Calu3 (cell line): ENCODE measurements at regions of chr11 and their contacts with region 1.

Region 1: DNA sequence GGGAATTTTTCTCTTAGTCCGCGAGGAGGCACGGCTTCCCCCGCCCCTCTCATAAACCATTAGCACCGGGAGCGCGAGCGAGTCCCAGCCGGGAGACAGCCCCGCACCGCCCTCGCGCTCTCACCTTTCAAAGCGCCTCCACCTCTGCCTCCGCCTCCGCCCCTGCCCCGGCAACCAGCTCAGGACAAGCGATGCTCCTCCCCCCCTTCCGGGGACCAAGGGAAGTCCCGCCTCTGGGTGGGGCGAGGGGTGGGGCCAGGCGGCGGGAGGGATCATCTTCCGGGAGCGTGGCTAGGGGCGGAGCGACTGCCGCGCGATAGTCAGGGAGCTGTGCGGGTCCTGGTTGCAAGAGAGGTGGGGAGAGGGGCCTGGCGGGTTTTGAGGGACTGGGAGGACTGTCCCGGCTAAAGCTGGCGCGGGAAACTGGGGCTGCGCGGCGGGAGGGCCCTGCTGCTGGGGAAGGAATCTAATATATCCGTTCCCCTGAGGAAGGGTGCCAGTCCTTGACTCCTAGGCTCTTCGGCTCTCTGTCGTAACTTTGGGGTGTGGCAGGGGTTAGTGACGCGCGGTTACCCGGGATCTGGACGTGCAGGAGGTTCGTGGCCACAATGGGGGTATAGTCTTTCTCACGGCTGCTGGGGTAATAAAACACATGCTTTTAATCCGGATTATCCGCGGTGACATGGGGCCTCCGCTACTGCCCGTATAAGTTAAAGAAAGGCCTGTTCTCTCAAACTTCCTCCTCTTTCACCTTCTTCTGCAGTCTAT is at the starts of genes CCDC82 and JRKL:
- DNase-seq: peak; percentile 96
- H3K4me3 Mint-ChIP-seq: peak within 1 kb of the TSS; percentile 92
- H3K27ac Mint-ChIP-seq: peak within 1 kb of the TSS; percentile 93
- H3K4me1 Mint-ChIP-seq: peaks cover 33% of the 10 kb centered on the region
- H3K27me3 Mint-ChIP-seq: no peaks in the 10 kb centered on the region
- CTCF ChIP-seq: no peak
- total RNA-seq, gene CCDC82: 20.1 and 23.3 TPM in 2 replicates
- total RNA-seq, gene JRKL: 9.3 and 11.6 TPM in 2 replicates

Region 2: GRCh38 chr11:95790123-95790932 is 599.6 kb before region 1 on chr11 and contains the start of gene CEP57:
- CTCF ChIA-PET with region 1: interaction called, 3 read pairs
- intact Hi-C with region 1: loop called (anchors 5 kb)
- DNase-seq: peak; percentile 92
- H3K4me3 Mint-ChIP-seq: peak within 1 kb of the TSS; percentile 73
- H3K27ac Mint-ChIP-seq: peak within 1 kb of the TSS; percentile 60
- H3K4me1 Mint-ChIP-seq: peaks cover 26% of the 10 kb centered on the region
- H3K27me3 Mint-ChIP-seq: no peaks in the 10 kb centered on the region
- CTCF ChIP-seq: no peak
- total RNA-seq, gene CEP57: 58.7 and 59.4 TPM in 2 replicates

Region 3: GRCh38 chr11:95835768-95836488 is 554.0 kb before region 1 on chr11:
- CTCF ChIA-PET with region 1: interaction called, 8 read pairs
- intact Hi-C with region 1: loop called (anchors 2 kb)
- DNase-seq: peak; percentile 62
- H3K4me3 Mint-ChIP-seq: no peak overlapping the region
- H3K27ac Mint-ChIP-seq: peak overlapping the region; percentile 52
- H3K4me1 Mint-ChIP-seq: peaks cover 9% of the 10 kb centered on the region
- H3K27me3 Mint-ChIP-seq: no peaks in the 10 kb centered on the region
- CTCF ChIP-seq: peak; percentile 68

Region 4: DNA sequence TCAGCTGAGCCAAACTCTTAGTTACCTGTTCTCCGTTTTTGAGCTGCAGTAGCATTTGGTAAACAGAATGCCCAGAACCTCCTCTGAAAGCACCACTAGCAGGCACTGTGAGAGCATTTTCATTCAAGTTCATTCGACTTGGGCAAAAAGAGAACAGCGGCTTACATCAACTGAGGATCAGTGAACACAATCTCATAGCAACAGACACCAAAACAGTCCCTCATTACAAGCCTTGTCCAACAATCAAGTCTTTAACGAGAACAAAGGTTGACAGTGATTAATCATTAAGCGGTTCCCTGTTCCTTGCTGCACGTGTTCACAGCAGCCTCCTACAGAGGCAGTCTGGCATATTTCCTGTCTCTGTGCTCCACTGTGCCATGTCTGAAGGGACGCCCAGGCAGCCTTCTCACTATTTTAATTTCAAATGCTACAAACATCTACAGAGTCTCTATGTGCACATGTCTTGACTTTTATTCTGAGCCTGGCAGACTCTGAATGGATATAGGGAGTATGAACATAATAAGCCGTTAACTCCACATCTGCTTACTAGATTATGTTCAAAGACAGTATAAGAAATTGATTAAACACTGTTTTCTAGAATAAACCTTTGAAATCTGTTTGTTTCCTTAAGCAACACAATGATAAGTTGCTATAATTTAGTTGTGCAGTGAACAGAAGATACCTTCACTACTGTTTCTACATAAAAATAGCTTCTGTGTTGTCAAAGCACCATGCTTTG is 377.6 kb before region 1 on chr11:
- CTCF ChIA-PET with region 1: no interaction called
- intact Hi-C with region 1: loop called (anchors 2 kb)
- DNase-seq: peak; percentile 60
- H3K4me3 Mint-ChIP-seq: no peak overlapping the region
- H3K27ac Mint-ChIP-seq: peak overlapping the region; percentile 75
- H3K4me1 Mint-ChIP-seq: peaks cover 38% of the 10 kb centered on the region
- H3K27me3 Mint-ChIP-seq: no peaks in the 10 kb centered on the region
- CTCF ChIP-seq: no peak

Region 5: DNA sequence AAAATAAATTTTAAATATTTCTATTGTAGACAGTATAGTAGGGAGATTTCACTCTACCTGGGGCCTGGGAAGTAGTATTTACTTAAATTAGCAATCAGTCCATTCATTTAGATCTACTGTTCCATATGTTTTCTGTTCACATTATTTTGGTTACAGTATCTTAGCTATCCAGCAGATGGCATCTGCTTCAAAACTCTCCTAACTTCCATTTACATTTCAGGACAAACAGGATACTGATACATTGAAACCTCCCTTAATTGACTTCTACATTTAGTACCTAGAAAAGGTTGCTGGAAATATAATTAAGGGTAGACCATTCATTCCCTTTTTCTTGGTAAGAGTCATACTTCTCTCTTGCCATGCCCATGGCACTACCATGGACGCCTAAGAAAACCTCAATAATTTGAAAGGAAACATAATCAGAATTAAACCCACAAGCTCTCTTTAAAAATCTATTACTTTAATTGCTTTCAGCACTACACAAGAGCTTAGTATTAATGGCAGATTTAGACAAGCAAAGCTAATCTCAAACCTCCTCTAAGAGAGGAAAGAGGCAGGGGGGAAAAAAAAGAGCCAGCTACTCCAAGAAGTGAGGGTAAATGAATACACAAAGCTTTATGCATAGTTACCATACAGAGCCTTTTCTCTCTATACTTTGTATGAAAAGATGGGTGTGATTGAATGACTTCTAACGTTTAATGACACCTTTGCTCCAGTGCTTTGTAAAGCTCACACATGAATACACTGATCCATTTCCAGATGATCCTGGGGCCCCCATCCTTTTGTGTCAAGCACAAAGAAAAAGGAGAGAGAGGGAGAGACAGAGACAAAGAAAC is 334.8 kb before region 1 on chr11:
- CTCF ChIA-PET with region 1: no interaction called
- intact Hi-C with region 1: loop called (anchors 2 kb)
- DNase-seq: no peak
- H3K4me3 Mint-ChIP-seq: no peak overlapping the region
- H3K27ac Mint-ChIP-seq: no peak overlapping the region
- H3K4me1 Mint-ChIP-seq: peaks cover 44% of the 10 kb centered on the region
- H3K27me3 Mint-ChIP-seq: no peaks in the 10 kb centered on the region
- CTCF ChIP-seq: no peak